Esophagus muscularis mucosa (tissue), 4 donors: ENCODE measurements at regions of chr18 and their contacts with region 1.

Region 1: DNA sequence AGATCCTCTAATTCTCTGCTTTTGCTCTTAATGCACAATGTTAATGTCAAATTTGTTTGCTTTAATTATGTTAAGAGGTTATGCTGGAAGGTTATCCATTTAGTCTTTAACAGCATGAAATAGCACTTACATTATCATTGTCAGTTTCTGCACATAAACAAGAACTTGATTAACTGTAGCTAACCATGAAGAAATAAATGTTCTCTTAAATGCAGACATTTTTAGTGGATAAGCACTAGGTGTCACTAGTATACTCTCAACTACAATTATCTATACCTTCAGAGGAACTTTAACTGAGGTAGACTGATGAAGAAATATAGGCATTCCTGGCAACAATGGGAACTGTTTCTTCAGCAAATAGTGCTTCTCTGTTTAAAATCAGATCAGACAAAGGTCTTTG is 178.8 kb upstream of the CHST9 start:
- DNase-seq: no peak
- H3K4me3 ChIP-seq: no peak overlapping the region
- H3K27ac ChIP-seq: no peak overlapping the region
- H3K4me1 ChIP-seq: no peaks in the 10 kb centered on the region
- H3K27me3 ChIP-seq: no peaks in the 10 kb centered on the region
- CTCF ChIP-seq: peak in 2 of 3 experiments; percentile 8 to 19
- EP300 ChIP-seq: no peak
- POLR2A ChIP-seq: no peak

Region 2: DNA sequence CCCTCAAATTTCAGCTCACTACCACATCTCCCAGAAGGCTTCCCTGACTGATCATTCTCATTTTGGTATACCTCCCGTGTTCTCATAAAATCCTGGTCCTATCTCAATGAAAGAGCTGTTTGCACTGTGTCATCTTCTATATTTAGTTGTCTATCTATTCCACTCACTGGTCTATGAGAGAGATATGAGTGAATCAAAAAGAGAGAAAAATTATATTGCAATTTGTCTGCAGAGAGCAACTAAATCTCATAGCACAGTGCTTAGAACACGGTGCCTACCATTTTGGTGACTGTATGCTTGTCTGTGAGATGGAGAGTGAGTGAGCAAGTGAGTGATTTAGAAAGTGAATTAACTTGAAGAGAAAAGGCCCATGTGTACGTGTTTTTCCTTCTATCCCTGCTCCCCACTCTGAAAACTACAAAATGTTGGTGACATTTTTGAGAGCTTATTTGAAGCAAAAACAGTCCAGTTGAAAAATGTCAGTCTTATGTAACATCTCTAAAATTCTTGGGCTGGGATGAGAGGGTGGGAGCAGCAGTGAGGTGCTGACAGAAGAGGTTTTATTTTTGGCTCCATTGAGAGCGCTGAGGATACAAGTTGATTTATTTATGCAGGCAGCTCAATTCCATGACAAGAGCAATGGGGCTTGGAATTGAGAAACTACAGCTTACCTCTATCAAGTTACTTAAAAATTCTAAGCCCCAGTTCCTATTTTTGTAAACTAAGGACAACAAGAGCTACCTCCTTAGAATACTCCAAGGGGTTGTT is 194.7 kb after region 1 on chr18:
- intact Hi-C with region 1: no loop called
- DNase-seq: no peak
- H3K4me3 ChIP-seq: no peak overlapping the region
- H3K27ac ChIP-seq: no peak overlapping the region
- H3K4me1 ChIP-seq: no peaks in the 10 kb centered on the region
- H3K27me3 ChIP-seq: no peaks in the 10 kb centered on the region
- CTCF ChIP-seq: no peak
- EP300 ChIP-seq: no peak
- POLR2A ChIP-seq: no peak

Region 3: GRCh38 chr18:27599202-27599829 is 235.4 kb after region 1 on chr18:
- intact Hi-C with region 1: loop called (anchors 5 kb)
- DNase-seq: no peak
- H3K4me3 ChIP-seq: no peak overlapping the region
- H3K27ac ChIP-seq: no peak overlapping the region
- H3K4me1 ChIP-seq: no peaks in the 10 kb centered on the region
- H3K27me3 ChIP-seq: no peaks in the 10 kb centered on the region
- CTCF ChIP-seq: peak; percentile 74 to 85 (median 83)
- EP300 ChIP-seq: no peak
- POLR2A ChIP-seq: no peak